ENCODE measurements at regions of chr6 and their contacts with region 1.

Region 1: GRCh38 chr6:135675862-135676261 is 175.6 kb upstream of the PDE7B start:
- DNase-seq: peak; percentile 49
- H3K4me3 Mint-ChIP-seq: no peak overlapping the region
- H3K27ac Mint-ChIP-seq: no peak overlapping the region
- H3K4me1 Mint-ChIP-seq: peaks cover 24% of the 10 kb centered on the region
- H3K27me3 Mint-ChIP-seq: no peaks in the 10 kb centered on the region

Region 2: GRCh38 chr6:135686784-135687301 is 11.0 kb after region 1 on chr6:
- CTCF ChIA-PET with region 1: no interaction called
- DNase-seq: no peak
- H3K4me3 Mint-ChIP-seq: no peak overlapping the region
- H3K27ac Mint-ChIP-seq: no peak overlapping the region
- H3K4me1 Mint-ChIP-seq: peaks cover 4% of the 10 kb centered on the region
- H3K27me3 Mint-ChIP-seq: no peaks in the 10 kb centered on the region

Region 3: DNA sequence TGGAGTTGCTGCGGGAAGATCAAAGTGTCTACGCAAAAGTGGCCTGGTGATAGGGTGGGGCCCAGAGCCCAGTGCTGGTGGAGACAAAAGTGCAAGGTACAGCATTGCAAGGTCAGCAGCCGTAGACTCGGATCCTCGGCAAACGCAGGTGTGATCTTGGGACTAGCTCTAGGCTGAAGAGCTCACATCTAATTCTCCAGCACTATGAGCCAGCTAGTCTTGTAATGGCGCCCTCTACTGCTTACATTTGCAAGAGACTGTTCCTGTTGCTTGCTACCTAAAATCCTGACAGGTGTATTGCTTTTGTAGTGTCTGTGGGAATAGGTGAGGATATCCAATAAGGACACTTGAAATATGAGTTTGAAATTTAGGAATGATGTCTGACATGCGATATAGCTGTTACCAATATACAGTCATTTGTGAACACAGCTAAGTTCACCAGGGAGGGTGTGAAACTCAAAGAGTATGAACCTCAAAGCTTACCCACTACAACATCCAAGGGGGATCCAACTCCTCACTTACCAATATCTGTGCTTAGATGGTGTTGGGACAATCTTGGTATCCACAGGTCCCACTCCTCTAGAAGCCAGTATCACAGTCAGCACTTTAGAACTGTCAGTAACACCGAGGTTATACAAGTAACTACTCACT is 234.0 kb after region 1 on chr6:
- CTCF ChIA-PET with region 1: interaction called, 11 read pairs
- DNase-seq: peak; percentile 73
- H3K4me3 Mint-ChIP-seq: no peak overlapping the region
- H3K27ac Mint-ChIP-seq: no peak overlapping the region
- H3K4me1 Mint-ChIP-seq: peaks cover 2% of the 10 kb centered on the region
- H3K27me3 Mint-ChIP-seq: no peaks in the 10 kb centered on the region

Region 4: GRCh38 chr6:136226027-136226673 is 550.3 kb after region 1 on chr6:
- CTCF ChIA-PET with region 1: interaction called, 19 read pairs
- DNase-seq: peak; percentile 64
- H3K4me3 Mint-ChIP-seq: no peak overlapping the region
- H3K27ac Mint-ChIP-seq: no peak overlapping the region
- H3K4me1 Mint-ChIP-seq: no peaks in the 10 kb centered on the region
- H3K27me3 Mint-ChIP-seq: no peaks in the 10 kb centered on the region

Measured in activated naive CD4-positive, alpha-beta T cell treated with anti-CD3 and anti-CD28 coated beads, Interleukin-2, amount 10 ng/mL, durations not matched to agents 7 days and 5 days (primary cell).